Lower leg skin (tissue), 4 donors: ENCODE measurements at regions of chr12 and their contacts with region 1.

Region 1: GRCh38 chr12:106386813-106387535 is 29.4 kb downstream of the POLR3B start:
- DNase-seq: no peak
- H3K4me3 ChIP-seq: no peak overlapping the region
- CTCF ChIP-seq: no peak
- POLR2A ChIP-seq: no peak

Region 2: GRCh38 chr12:106919910-106920544 is 533.1 kb after region 1 on chr12:
- intact Hi-C with region 1: loop called (anchors 10 kb)
- DNase-seq: no peak
- H3K4me3 ChIP-seq: no peak overlapping the region
- CTCF ChIP-seq: peak in 1 of 3 donors; percentile 51
- POLR2A ChIP-seq: no peak